ENCODE measurements at regions of chr12 and their contacts with region 1.

Region 1: DNA sequence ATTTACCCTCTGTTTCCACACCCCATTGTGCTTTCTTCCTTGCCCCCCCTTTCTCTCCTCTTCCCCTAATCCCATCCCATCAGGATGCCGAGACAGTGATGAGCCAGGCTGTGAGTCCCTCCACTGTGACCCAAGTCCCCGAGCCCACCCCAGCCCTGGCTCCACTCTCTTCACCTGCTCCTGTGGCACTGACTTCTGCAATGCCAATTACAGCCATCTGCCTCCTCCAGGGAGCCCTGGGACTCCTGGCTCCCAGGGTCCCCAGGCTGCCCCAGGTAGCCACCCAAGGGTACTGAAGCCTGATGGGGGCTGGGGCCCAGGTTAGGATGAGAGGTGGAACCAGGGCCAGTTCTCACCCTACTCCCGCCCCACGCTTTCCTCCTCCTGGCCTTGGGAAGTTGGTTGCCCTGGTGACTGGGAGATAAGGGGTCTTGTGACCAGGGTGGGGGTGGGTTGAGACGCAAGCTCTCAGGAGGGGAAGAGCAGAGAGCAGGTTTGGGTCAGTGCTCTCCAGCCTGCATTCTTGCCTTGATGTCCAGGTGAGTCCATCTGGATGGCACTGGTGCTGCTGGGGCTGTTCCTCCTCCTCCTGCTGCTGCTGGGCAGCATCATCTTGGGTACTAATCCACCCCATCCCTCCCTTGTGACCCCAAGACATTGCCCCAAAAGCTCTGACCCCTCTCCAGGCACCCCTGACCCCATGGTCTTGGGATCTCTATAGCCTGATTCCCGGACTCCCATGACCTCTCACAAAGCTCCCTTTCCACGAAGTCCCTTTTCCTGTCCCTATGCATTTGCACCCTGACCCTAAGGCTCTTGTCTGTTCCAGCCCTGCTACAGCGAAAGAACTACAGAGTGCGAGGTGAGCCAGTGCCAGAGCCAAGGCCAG is 1.2 kb downstream of the AMHR2 start:
- DNase-seq: no peak
- H3K4me3 Mint-ChIP-seq: no peak overlapping the region
- H3K27ac Mint-ChIP-seq: no peak overlapping the region
- H3K4me1 Mint-ChIP-seq: peaks cover 19% of the 10 kb centered on the region
- H3K27me3 Mint-ChIP-seq: no peaks in the 10 kb centered on the region
- CTCF ChIP-seq: no peak

Region 2: DNA sequence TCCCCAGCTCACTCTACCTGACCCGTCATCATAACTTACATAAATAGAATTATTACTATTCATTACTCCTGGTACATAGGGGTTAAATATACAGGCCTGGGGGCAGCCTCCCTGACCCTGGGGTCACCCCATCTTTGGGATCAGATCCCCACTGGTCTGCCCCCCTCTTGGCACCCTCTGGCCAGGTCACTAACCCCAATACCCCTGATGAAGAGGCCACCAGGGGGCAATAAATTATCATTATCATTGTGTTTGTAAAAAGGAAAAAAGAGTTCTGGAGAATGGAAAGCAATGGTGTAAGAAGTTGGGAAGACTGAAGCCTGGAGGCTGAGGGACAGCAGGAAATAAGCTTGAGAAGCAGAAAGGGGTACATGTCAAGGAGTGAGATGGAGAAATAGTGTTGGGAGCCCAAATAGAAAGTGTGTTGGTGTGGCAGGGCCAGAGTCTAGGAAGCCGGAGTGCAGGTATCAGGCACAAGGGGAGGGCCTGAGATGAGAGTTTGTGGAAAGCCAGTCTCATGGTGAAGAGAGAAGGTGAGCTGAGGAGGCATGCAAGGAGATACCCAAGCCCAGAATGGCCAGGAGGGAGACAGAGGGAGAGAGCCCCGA is 97.3 kb before region 1 on chr12:
- CTCF ChIA-PET with region 1: interaction called, 21 read pairs
- intact Hi-C with region 1: loop called (anchors 1 kb)
- DNase-seq: peak; percentile 18
- H3K4me3 Mint-ChIP-seq: no peak overlapping the region
- H3K27ac Mint-ChIP-seq: no peak overlapping the region
- H3K4me1 Mint-ChIP-seq: no peaks in the 10 kb centered on the region
- H3K27me3 Mint-ChIP-seq: peaks cover 45% of the 10 kb centered on the region
- CTCF ChIP-seq: peak; percentile 26

Region 3: GRCh38 chr12:53344824-53345485 is 79.9 kb before region 1 on chr12:
- CTCF ChIA-PET with region 1: interaction called, 11 read pairs
- intact Hi-C with region 1: no loop called
- DNase-seq: peak; percentile 69
- H3K4me3 Mint-ChIP-seq: peak overlapping the region; percentile 85
- H3K27ac Mint-ChIP-seq: peak overlapping the region; percentile 40
- H3K4me1 Mint-ChIP-seq: no peaks in the 10 kb centered on the region
- H3K27me3 Mint-ChIP-seq: peaks cover 58% of the 10 kb centered on the region
- CTCF ChIP-seq: peak; percentile 43

Region 4: GRCh38 chr12:53352331-53353256 is 72.3 kb before region 1 on chr12:
- CTCF ChIA-PET with region 1: interaction called, 46 read pairs
- intact Hi-C with region 1: loop called (anchors 1 kb)
- DNase-seq: peak; percentile 76
- H3K4me3 Mint-ChIP-seq: no peak overlapping the region
- H3K27ac Mint-ChIP-seq: no peak overlapping the region
- H3K4me1 Mint-ChIP-seq: peaks cover 9% of the 10 kb centered on the region
- H3K27me3 Mint-ChIP-seq: no peaks in the 10 kb centered on the region
- CTCF ChIP-seq: peak; percentile 49

Region 5: GRCh38 chr12:53379389-53380103 is 45.3 kb before region 1 on chr12:
- CTCF ChIA-PET with region 1: interaction called, 11 read pairs
- intact Hi-C with region 1: no loop called
- DNase-seq: peak; percentile 95
- H3K4me3 Mint-ChIP-seq: no peak overlapping the region
- H3K27ac Mint-ChIP-seq: no peak overlapping the region
- H3K4me1 Mint-ChIP-seq: peaks cover 15% of the 10 kb centered on the region
- H3K27me3 Mint-ChIP-seq: no peaks in the 10 kb centered on the region
- CTCF ChIP-seq: no peak

Region 6: DNA sequence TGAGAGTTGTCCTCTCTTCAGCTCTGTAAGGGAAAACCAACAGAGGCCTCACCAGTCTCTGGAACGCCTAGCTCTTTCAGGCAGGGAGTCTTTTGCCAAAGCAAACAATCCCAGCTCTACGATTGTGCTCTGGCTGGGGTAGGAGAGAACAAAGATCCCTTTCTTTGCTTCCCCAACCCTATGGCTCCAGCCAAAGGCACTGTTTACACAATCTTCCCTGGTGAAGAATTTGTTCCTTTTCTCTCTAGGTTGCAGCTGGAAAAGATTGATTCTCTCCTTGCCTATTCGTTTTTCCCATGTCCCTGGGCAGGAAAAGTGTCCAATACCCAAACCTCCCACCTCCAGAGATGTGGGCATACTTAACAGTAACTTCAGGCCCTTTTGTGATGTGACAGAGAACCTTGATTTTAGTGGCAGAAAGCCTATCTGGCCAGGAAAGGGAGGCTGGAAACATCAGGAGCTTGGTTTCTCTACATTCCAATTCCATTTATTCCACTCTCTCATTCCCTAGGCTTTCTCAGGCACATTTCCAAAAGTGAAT is 234.2 kb after region 1 on chr12:
- CTCF ChIA-PET with region 1: no interaction called
- intact Hi-C with region 1: no loop called
- DNase-seq: peak; percentile 54
- H3K4me3 Mint-ChIP-seq: peak overlapping the region; percentile 32
- H3K27ac Mint-ChIP-seq: peak overlapping the region; percentile 75
- H3K4me1 Mint-ChIP-seq: peaks cover 21% of the 10 kb centered on the region
- H3K27me3 Mint-ChIP-seq: no peaks in the 10 kb centered on the region
- CTCF ChIP-seq: no peak